PC-9 (cell line): ENCODE measurements at regions of chr7 and their contacts with region 1.

Region 1: GRCh38 chr7:7182156-7183060 is at the start of gene C1GALT1:
- DNase-seq: peak; percentile 95 to 99
- H3K4me3 ChIP-seq: peak within 1 kb of the TSS; percentile 67
- H3K27ac ChIP-seq: peak within 1 kb of the TSS; percentile 88
- H3K4me1 ChIP-seq: peaks cover 42% of the 10 kb centered on the region
- H3K27me3 ChIP-seq: no peaks in the 10 kb centered on the region
- CTCF ChIP-seq: peak; percentile 43; the same call in 1 of the 2 replicates
- total RNA-seq, gene C1GALT1: 44.7 and 54.2 TPM in 2 replicates

Region 2: DNA sequence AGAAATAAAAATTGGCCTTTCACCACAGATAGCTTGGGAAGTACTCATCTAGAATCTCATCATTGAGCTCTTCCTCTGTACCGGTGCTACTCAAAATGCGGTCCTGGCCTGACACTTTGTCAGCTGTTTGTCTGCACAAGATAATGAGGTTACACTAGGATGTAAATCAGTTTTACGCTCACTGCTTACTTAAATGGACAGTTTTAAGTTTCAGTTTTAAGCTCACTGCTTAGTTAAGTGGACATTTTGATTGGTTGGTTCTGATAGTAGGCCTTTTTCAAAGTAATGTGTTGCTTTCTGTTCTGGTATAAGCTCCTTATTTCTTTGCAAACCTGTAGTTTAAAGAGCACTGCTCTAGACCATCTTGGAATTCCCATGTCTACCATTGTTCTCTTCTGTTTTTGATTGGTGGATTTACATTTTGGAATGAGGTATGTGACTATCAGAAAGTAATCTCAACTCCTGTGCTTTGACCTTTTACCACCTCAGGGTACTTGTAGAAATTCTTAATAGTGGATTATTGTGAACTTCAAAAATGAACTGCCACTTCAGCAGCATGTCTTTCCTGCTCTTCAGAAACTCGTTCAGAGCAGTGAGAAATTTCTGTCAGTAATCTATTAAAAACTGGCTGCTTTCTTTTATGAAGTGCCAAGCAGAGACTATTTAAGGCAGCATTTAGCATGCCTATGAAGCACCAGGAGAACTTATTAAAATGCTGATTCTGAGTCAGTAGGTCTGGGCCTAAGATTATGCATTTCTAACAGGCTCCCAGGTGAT is 55.0 kb after region 1 on chr7:
- CTCF ChIA-PET with region 1: no interaction called
- POLR2A ChIA-PET with region 1: interaction called, 3 read pairs
- intact Hi-C with region 1: loop called (anchors 2 kb)
- DNase-seq: no peak
- H3K4me3 ChIP-seq: no peak overlapping the region
- H3K27ac ChIP-seq: no peak overlapping the region
- H3K4me1 ChIP-seq: 0 out of 2 replicates have a peak, but pooled peaks cover 5% of the 10 kb centered on the region
- H3K27me3 ChIP-seq: no peaks in the 10 kb centered on the region
- CTCF ChIP-seq: no peak

Region 3: DNA sequence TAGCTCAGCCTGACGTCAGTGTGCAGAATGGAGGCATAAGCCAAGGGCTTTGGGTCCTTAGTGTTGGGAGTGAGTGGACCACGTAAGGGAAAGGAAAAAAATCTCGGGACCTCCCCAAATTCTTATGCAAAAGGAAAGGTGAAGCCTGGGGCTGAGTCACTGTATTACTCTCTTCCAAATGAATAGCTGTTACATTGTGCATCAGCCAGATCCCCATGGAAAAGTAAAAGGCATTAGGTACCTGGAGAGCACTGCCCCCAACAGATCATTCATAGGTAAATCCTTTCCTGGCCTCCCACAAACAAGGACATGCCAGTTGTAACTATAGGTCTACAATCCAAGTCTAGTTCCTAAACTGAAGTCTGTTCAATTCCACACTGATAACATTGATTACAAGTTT is 170.4 kb after region 1 on chr7:
- CTCF ChIA-PET with region 1: no interaction called
- POLR2A ChIA-PET with region 1: no interaction called
- intact Hi-C with region 1: loop called (anchors 1 kb)
- DNase-seq: peak; percentile 18 to 57
- H3K4me3 ChIP-seq: no peak overlapping the region
- H3K27ac ChIP-seq: no peak overlapping the region
- H3K4me1 ChIP-seq: peaks cover 37% of the 10 kb centered on the region
- H3K27me3 ChIP-seq: no peaks in the 10 kb centered on the region
- CTCF ChIP-seq: peak; percentile 32; the same call in 1 of the 2 replicates

Region 4: DNA sequence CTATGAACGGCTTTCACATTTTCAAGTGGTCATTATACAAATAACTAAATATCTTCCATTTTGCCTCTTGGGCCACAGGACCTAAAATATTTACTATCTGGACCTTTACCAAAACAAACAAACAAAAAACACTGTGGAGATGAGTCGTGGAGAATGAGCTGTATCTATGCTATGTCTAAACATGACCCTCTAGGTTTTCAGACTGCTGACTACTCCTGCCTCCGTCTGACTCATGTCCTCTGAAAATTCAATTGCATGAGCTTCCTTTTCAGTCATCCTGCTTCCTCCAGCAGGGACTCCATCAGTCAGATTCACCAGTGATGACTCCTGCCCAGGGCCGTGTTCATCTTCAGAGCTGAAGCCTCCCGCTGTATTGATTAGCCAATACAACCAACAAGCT is 256.4 kb after region 1 on chr7:
- CTCF ChIA-PET with region 1: interaction called, 4 read pairs
- POLR2A ChIA-PET with region 1: interaction called, 12 read pairs
- intact Hi-C with region 1: no loop called
- DNase-seq: peak; percentile 48 to 95
- H3K4me3 ChIP-seq: no peak overlapping the region
- H3K27ac ChIP-seq: 0 out of 2 replicates have a peak overlapping the region, but pooled peaks have one; percentile 11
- H3K4me1 ChIP-seq: peaks cover 17% of the 10 kb centered on the region
- H3K27me3 ChIP-seq: no peaks in the 10 kb centered on the region
- CTCF ChIP-seq: no peak

Region 5: GRCh38 chr7:7566651-7567611 is 384.5 kb after region 1 on chr7 and contains the start of gene MIOS:
- CTCF ChIA-PET with region 1: no interaction called
- POLR2A ChIA-PET with region 1: interaction called, 6 read pairs
- intact Hi-C with region 1: loop called (anchors 1 kb)
- DNase-seq: peak; percentile 67 to 91
- H3K4me3 ChIP-seq: peak within 1 kb of the TSS; percentile 92
- H3K27ac ChIP-seq: peak within 1 kb of the TSS; percentile 97
- H3K4me1 ChIP-seq: peaks cover 64% of the 10 kb centered on the region
- H3K27me3 ChIP-seq: no peaks in the 10 kb centered on the region
- CTCF ChIP-seq: no peak
- total RNA-seq, gene MIOS: 35.8 and 42.0 TPM in 2 replicates

Region 6: GRCh38 chr7:8295638-8296361 is 1113.4 kb after region 1 on chr7:
- CTCF ChIA-PET with region 1: no interaction called
- POLR2A ChIA-PET with region 1: no interaction called
- intact Hi-C with region 1: loop called (anchors 10 kb)
- DNase-seq: peak; percentile 46 to 82
- H3K4me3 ChIP-seq: no peak overlapping the region
- H3K27ac ChIP-seq: no peak overlapping the region
- H3K4me1 ChIP-seq: peaks cover 11% of the 10 kb centered on the region
- H3K27me3 ChIP-seq: no peaks in the 10 kb centered on the region
- CTCF ChIP-seq: peak; percentile 93